ENCODE measurements at regions of chr10 and their contacts with region 1.

Region 1: GRCh38 chr10:84862551-84862950 is 534.2 kb downstream of the CCSER2 start:
- DNase-seq: no peak
- H3K4me3 ChIP-seq: no peak overlapping the region
- H3K27ac ChIP-seq: no peak overlapping the region
- H3K4me1 ChIP-seq: no peaks in the 10 kb centered on the region
- H3K27me3 ChIP-seq: no peaks in the 10 kb centered on the region
- CTCF ChIP-seq: no peak
- EP300 ChIP-seq: no peak
- POLR2A ChIP-seq: no peak

Region 2: DNA sequence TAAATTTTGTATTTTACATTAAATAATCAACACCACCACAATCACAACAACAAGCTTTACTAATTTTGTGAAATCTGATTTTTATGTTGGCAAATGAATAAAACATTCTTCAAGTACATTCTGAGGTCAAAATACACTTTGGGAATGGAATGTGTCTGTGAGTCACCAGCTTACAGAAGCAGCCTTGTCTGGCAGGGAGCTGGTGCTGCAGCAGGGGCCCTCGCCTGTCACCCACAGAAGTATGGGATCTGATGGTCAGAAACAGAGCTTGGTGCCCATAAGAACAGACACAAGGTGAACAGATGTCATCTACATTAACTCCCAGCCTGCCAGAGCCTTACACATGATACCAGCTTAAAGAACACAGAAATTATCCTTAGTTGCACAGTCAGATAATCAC is 37.2 kb before region 1 on chr10:
- intact Hi-C with region 1: loop called in 1 of 4 experiments (anchors 1 kb)
- DNase-seq: no peak
- H3K4me3 ChIP-seq: no peak overlapping the region
- H3K27ac ChIP-seq: no peak overlapping the region
- H3K4me1 ChIP-seq: no peaks in the 10 kb centered on the region
- H3K27me3 ChIP-seq: no peaks in the 10 kb centered on the region
- CTCF ChIP-seq: no peak
- EP300 ChIP-seq: no peak
- POLR2A ChIP-seq: no peak

Region 3: DNA sequence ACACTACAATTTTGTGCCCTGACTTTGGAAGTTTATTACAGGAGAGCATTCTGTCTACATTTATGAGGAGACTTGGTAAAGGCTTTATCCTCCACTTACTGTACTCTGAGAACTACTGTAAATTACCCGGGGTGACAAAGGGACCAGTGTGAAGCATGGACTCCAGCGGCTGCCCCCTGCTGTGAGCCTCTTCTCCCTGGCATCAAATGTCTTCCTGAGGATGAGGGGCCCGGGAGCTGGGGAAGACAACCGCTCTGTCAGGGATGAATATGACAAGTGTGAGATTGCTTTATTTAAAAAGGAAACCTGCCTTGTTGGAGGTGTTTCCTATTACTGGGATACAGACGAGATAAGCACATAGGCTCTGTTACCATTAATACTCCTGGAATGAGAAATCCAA is 180.7 kb after region 1 on chr10:
- intact Hi-C with region 1: no loop called
- DNase-seq: no peak
- H3K4me3 ChIP-seq: no peak overlapping the region
- H3K27ac ChIP-seq: no peak overlapping the region
- H3K4me1 ChIP-seq: no peaks in the 10 kb centered on the region
- H3K27me3 ChIP-seq: no peaks in the 10 kb centered on the region
- CTCF ChIP-seq: no peak
- EP300 ChIP-seq: no peak
- POLR2A ChIP-seq: no peak